Activated naive CD4-positive, alpha-beta T cell treated with anti-CD3 and anti-CD28 coated beads for 36 hours (primary cell): ENCODE measurements at regions of chr13 and their contacts with region 1.

Region 1: GRCh38 chr13:80363890-80364503 is 23.1 kb upstream of the SPRY2 start:
- DNase-seq: no peak
- H3K4me3 Mint-ChIP-seq: no peak overlapping the region
- H3K27ac Mint-ChIP-seq: no peak overlapping the region
- H3K4me1 Mint-ChIP-seq: no peaks in the 10 kb centered on the region
- H3K27me3 Mint-ChIP-seq: peaks cover 2% of the 10 kb centered on the region

Region 2: GRCh38 chr13:79679334-79679733 is 684.7 kb before region 1 on chr13:
- CTCF ChIA-PET with region 1: interaction called, 3 read pairs
- intact Hi-C with region 1: loop called (anchors 1 kb)
- DNase-seq: peak; percentile 64
- H3K4me3 Mint-ChIP-seq: no peak overlapping the region
- H3K27ac Mint-ChIP-seq: no peak overlapping the region
- H3K4me1 Mint-ChIP-seq: no peaks in the 10 kb centered on the region
- H3K27me3 Mint-ChIP-seq: peaks cover 3% of the 10 kb centered on the region

Region 3: DNA sequence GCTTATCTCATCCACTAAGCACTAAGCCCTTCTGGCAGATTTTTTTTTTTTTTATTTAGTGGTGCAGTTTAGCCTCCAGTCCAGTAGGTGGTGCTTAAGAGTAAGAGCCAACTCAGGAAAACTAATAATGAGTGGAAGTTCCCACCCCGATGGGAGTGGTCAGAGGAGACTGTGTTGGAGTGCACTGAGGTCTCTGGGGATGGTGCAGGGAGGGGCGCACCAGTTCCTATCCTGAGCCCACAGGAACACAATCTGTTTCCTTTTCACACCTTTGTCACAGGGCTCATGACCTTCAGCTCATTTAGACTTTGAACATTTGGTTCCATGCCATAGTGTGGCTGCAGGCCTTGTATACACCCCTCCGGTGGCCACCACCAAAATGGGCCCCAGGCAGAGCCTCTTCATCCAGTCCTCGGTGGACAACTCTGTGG is 390.4 kb before region 1 on chr13:
- CTCF ChIA-PET with region 1: no interaction called
- intact Hi-C with region 1: loop called (anchors 5 kb)
- DNase-seq: no peak
- H3K4me3 Mint-ChIP-seq: no peak overlapping the region
- H3K27ac Mint-ChIP-seq: no peak overlapping the region
- H3K4me1 Mint-ChIP-seq: no peaks in the 10 kb centered on the region
- H3K27me3 Mint-ChIP-seq: no peaks in the 10 kb centered on the region

Region 4: DNA sequence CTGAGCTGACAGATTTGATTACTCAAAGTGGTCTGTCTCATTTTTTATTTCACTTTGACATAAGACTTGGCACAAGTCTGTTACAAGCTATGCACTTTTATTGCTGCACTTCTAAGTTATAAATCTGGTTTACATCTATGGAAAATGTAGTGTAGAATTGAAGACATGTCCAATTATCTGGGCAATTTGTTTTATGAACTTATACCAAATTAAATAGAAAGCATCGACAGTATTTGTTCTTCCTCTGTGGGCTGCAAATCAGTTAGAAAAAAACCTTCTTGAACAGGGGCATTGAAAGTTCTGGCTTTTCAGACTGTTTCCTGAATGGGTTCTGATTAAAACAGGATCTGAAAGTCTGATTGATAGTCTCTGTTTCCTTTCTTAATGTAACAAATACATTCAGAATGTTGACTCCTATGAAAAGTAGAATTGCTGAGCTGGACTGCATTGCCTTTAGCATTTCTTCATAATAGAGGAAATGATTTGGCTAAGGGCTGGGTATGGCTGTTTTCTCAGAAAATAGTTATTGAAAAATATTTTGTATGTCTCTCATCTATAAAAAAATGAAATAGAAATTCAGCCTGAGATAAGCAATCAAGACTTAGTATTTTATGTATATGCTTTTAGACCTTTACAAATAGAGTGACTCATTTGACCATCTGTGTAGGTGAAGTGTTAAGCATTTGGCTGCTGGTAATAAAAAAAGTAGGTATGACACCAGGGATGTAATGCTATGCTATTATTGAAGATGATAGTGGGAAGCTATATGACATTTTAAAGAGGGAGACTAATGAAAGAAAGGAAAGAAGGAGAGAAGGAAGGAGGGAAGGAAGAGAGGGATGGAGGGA is 187.9 kb after region 1 on chr13:
- CTCF ChIA-PET with region 1: interaction called, 11 read pairs
- intact Hi-C with region 1: no loop called
- DNase-seq: no peak
- H3K4me3 Mint-ChIP-seq: no peak overlapping the region
- H3K27ac Mint-ChIP-seq: no peak overlapping the region
- H3K4me1 Mint-ChIP-seq: peaks cover 4% of the 10 kb centered on the region
- H3K27me3 Mint-ChIP-seq: no peaks in the 10 kb centered on the region